ENCODE measurements at regions of chr15 and their contacts with region 1.

Region 1: GRCh38 chr15:80081390-80081789 is 21.9 kb downstream of the ZFAND6 start:
- DNase-seq: peak; percentile 72 to 83 (median 82)
- H3K4me3 ChIP-seq: peak overlapping the region in 1 of 3 experiments; percentile 5
- H3K4me3 Mint-ChIP-seq: no peak overlapping the region
- H3K27ac ChIP-seq: peak overlapping the region in 1 of 2 donors; percentile 69
- H3K27ac Mint-ChIP-seq: peak overlapping the region in 5 of 7 donors; percentile 5 to 58 (median 38)
- H3K4me1 ChIP-seq: peaks cover 12 to 16% of the 10 kb centered on the region in 2 donors
- H3K4me1 Mint-ChIP-seq: peaks cover 21% of the 10 kb centered on the region
- H3K27me3 ChIP-seq: no peaks in the 10 kb centered on the region
- H3K27me3 Mint-ChIP-seq: peaks cover 0 to 3% (median 0%) of the 10 kb centered on the region in 3 donors
- CTCF ChIP-seq: no peak

Region 2: GRCh38 chr15:80136854-80137253 is 55.5 kb after region 1 on chr15:
- intact Hi-C with region 1: loop called in 1 of 2 experiments (anchors 10 kb)
- DNase-seq: no peak
- H3K4me3 ChIP-seq: no peak overlapping the region
- H3K4me3 Mint-ChIP-seq: no peak overlapping the region
- H3K27ac ChIP-seq: no peak overlapping the region
- H3K27ac Mint-ChIP-seq: no peak overlapping the region
- H3K4me1 ChIP-seq: peaks cover 13 to 14% of the 10 kb centered on the region in 2 donors
- H3K4me1 Mint-ChIP-seq: peaks cover 27% of the 10 kb centered on the region
- H3K27me3 ChIP-seq: no peaks in the 10 kb centered on the region
- H3K27me3 Mint-ChIP-seq: peaks cover 0 to 2% (median 0%) of the 10 kb centered on the region in 3 donors
- CTCF ChIP-seq: no peak

Measured in CD14-positive monocyte (primary cell).